Activated CD8-positive, alpha-beta T cell treated with anti-CD3 and anti-CD28 coated beads, Interleukin-2, amount 10 ng/mL, durations not matched to agents 7 days and 5 days (primary cell): ENCODE measurements at regions of chr12 and their contacts with region 1.

Region 1: GRCh38 chr12:49967042-49967776 is 5.5 kb downstream of the AQP5 start:
- DNase-seq: peak; percentile 94
- ATAC-seq: peak; percentile 92
- H3K4me3 Mint-ChIP-seq: peak overlapping the region; percentile 60
- H3K27ac Mint-ChIP-seq: no peak overlapping the region
- H3K4me1 Mint-ChIP-seq: peaks cover 5% of the 10 kb centered on the region
- H3K27me3 Mint-ChIP-seq: peaks cover 36% of the 10 kb centered on the region

Region 2: DNA sequence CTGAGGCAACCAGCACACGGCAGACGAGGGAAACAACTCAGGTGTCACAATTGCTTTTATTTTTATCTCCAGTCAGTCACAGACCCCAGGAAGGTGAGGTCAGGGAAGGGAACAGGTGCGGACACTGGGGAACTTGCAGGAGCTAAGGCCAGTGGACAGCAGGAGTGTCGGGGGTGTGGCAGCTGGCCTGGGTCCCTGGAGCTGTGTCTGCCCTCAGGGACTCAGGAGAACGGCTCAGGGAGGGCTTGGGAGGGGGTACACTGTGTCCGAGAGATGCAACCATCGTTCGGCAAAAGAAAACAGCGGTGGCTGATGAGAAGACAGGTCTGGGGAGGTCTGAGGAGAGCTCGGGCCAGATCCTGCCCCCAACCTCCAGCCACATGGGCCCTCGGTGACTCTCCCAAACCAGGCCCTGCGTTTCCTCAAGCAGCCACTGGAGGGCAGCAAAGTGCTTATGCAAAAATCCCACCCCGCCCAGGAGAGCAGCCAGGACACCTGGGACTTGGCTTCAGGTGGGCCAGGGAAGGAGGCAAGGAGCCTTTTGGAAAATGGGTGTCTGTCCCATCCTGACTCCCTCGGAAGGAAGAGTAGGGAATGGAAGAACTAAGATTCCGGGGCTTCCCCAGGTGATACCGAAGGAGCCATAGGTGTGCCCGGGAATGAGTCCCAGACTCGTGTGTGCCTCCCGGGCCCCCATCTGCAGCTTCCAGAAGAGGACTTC is 100.2 kb before region 1 on chr12:
- CTCF ChIA-PET with region 1: interaction called, 34 read pairs
- POLR2A ChIA-PET with region 1: no interaction called
- DNase-seq: peak; percentile 80
- ATAC-seq: peak; percentile 78
- H3K4me3 Mint-ChIP-seq: no peak overlapping the region
- H3K27ac Mint-ChIP-seq: no peak overlapping the region
- H3K4me1 Mint-ChIP-seq: no peaks in the 10 kb centered on the region
- H3K27me3 Mint-ChIP-seq: peaks cover 7% of the 10 kb centered on the region

Region 3: DNA sequence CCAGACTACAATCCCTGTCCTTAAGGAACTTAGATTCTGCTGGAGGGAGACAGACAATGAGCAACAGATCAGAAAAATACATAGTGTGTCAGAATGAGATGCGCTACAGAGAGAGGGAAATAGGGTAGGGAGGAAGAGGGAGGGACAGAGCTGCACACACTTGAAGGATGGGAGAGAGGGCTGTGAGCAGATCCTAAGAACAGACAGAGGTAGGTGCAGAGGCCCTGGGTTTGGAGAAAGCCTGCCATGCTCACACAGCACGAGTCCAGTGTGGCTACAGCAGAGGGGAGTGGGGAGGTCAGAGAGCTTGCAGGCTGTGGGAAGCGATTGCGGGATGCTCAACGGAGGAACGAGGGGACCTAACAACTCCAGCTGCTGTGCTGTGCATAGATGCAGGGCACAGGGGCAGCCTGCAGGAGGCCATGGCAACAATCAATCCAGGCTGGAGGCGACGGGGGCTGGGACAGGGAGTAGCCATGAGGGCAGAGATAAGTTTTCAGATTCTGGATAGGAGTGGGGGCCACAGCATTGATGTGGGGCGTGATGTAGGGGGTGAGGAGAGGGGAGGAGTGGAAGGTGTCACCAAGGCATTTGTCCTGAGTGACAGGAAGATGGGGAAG is 84.2 kb before region 1 on chr12:
- CTCF ChIA-PET with region 1: no interaction called
- POLR2A ChIA-PET with region 1: no interaction called
- DNase-seq: no peak
- ATAC-seq: no peak
- H3K4me3 Mint-ChIP-seq: no peak overlapping the region
- H3K27ac Mint-ChIP-seq: peak overlapping the region; percentile 23
- H3K4me1 Mint-ChIP-seq: no peaks in the 10 kb centered on the region
- H3K27me3 Mint-ChIP-seq: peaks cover 13% of the 10 kb centered on the region

Region 4: DNA sequence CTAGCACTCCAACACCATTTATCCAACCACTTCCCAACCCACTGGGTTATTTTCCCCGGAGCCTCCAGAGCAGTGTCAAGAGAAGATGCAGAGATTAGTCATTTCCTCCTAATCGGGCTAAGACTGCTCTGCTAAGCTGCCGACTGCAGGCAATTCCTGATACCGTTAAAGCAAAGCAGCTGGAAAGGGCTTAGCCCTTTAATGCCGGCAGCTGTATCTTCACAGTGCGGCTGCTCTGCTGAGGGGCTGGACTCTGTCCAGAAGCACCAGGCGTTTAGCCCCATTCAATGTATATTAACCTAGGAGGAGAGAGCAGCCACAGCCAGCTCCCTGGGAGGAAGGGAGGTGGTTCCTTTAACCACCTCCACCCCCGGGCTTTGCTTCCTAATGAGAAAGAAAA is 16.7 kb after region 1 on chr12:
- CTCF ChIA-PET with region 1: interaction called, 117 read pairs
- POLR2A ChIA-PET with region 1: no interaction called
- DNase-seq: no peak
- ATAC-seq: no peak
- H3K4me3 Mint-ChIP-seq: no peak overlapping the region
- H3K27ac Mint-ChIP-seq: no peak overlapping the region
- H3K4me1 Mint-ChIP-seq: no peaks in the 10 kb centered on the region
- H3K27me3 Mint-ChIP-seq: no peaks in the 10 kb centered on the region

Region 5: DNA sequence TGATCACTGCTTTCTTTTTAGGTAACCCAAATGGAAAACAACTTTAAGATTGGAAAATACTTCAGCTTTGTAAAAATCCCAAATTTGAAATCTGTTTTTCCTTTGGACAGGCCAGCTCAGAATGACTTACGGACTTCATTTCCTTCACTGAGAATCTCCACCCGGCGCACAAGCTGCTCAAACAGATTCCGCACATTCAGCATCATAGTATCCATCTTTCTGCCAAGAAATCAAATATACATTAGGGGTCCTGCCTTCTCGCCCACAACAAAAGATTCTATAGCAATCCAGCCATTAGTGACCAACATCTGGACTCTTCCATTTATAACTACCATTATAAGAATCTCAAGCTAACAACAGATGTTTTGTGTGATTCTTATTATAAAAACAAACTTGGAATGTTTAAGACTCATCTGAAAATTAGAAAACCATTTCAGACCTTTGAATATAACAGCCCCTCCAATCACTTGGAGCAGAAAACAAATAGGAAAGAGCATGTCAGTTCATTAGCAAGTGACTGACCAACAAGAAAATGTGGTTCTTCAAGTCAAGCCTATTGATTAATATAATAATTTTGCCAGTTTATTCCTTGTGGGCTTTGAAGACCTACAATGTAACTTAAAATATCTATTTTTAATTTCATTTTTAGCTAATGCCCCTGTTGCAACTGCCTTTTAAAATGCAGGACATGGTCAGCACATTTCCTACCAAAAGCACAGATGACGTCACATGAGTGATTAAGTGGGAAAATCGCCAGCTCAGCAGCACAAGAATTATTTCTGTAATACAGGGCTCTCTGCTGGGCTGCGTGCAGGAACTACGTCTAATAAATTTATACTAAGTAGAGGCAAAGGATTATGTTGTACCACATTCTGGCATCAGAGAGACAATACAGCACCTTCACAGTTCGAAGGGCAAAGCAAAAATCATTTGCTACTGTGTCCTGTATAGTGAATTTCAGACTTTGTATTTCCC is 49.6 kb after region 1 on chr12:
- CTCF ChIA-PET with region 1: interaction called, 15 read pairs
- POLR2A ChIA-PET with region 1: no interaction called
- DNase-seq: no peak
- ATAC-seq: no peak
- H3K4me3 Mint-ChIP-seq: no peak overlapping the region
- H3K27ac Mint-ChIP-seq: no peak overlapping the region
- H3K4me1 Mint-ChIP-seq: peaks cover 39% of the 10 kb centered on the region
- H3K27me3 Mint-ChIP-seq: no peaks in the 10 kb centered on the region

Region 6: GRCh38 chr12:50055831-50056638 is 88.8 kb after region 1 on chr12:
- CTCF ChIA-PET with region 1: interaction called, 56 read pairs
- POLR2A ChIA-PET with region 1: no interaction called
- DNase-seq: peak; percentile 72
- ATAC-seq: peak; percentile 20
- H3K4me3 Mint-ChIP-seq: peak overlapping the region; percentile 41
- H3K27ac Mint-ChIP-seq: no peak overlapping the region
- H3K4me1 Mint-ChIP-seq: peaks cover 45% of the 10 kb centered on the region
- H3K27me3 Mint-ChIP-seq: peaks cover 34% of the 10 kb centered on the region

Region 7: DNA sequence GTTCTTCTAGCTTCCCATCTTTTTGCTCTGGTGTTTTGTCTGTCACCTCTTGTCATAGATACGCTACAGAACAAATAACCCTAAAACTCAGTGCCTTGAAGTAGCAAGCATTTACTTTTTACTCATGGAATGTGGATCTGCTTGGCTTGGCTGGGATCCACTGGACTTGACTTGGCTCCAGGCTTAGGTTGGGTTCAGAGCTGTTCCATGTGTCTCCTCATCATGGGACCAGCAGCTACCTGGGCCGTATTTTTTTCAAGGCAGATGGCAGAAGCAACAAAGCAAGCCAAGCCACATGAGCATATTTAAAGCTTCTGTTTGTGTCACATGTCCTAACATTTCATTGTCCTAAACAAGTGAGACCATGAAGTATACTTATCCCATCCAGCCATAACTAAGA is 748.0 kb after region 1 on chr12:
- CTCF ChIA-PET with region 1: no interaction called
- POLR2A ChIA-PET with region 1: no interaction called
- DNase-seq: no peak
- ATAC-seq: no peak
- H3K4me3 Mint-ChIP-seq: no peak overlapping the region
- H3K27ac Mint-ChIP-seq: peak overlapping the region; percentile 47
- H3K4me1 Mint-ChIP-seq: no peaks in the 10 kb centered on the region
- H3K27me3 Mint-ChIP-seq: no peaks in the 10 kb centered on the region